ENCODE measurements at regions of chr9 and their contacts with region 1.

Region 1: DNA sequence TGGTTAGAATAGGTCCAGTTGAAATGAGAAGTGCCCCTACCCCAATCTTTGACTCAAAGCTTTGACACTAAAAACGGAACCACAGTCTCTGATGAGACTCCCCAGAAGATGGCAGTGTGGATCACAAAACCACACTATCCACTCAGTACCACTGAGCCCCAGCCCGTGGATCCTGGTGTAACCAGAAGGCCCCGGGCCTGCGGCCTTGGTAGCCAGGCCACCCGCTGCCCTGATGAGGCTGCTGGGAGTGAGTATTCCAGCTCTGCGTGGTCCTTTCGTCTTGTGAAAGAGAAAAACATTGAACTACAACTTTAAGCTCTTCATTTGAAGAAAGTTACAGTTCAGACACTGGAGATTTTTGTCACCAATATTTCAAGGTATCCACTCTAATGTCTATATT is 42.2 kb upstream of the FBP1 start:
- DNase-seq: peak; percentile 78
- CTCF ChIP-seq: peak; percentile 70

Region 2: GRCh38 chr9:94586814-94587213 is 94.7 kb before region 1 on chr9:
- in situ Hi-C with region 1: no loop called
- DNase-seq: no peak
- CTCF ChIP-seq: no peak

Region 3: DNA sequence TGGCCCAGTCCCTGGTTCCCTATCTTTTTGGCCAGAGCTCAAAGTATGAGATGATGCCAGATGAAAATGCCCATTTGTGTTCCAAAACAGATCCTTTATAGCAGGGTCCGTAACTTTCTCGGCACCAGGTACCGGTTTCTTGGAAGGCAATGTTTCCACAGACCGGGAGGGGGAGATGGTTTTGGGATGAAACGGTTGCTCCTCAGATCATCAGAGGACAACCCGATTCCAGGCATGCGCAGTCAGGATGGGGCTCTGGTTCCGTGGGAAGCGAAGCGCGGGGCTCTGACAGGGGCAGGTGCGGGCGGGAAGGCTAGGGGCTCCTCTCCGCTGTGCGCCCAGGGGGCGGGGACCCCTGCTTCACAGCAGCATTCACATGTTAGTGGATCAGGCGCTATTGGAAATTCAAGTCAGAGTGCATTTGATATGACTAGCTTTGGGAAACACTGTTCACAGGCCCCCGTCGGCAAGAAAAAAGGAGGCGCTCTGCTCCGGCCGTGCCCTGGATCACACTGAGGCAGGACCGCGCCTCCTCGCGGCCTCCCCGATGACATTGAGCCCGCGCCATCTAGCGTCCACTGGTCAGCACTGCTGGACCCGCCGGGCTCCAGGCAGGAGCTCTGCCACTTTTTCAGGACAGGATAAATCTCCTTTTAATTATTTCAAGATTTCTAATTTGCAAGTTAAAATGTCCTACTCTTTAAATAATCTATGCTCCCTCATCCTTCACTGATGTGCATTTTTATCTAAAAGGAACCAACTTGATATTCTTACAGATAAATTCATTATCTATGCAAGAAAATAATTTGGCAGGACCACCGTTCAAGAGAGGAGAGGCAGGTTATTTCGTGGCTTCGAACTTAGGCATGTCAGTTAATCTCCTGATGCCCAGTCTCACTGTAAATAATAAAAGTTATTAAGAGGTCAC is 446.0 kb after region 1 on chr9:
- in situ Hi-C with region 1: loop called (anchors 5 kb)
- DNase-seq: peak; percentile 82
- CTCF ChIP-seq: peak; percentile 99

Measured in GM13977 (cell line).